A673 (cell line): ENCODE measurements at regions of chr12 and their contacts with region 1.

Region 1: DNA sequence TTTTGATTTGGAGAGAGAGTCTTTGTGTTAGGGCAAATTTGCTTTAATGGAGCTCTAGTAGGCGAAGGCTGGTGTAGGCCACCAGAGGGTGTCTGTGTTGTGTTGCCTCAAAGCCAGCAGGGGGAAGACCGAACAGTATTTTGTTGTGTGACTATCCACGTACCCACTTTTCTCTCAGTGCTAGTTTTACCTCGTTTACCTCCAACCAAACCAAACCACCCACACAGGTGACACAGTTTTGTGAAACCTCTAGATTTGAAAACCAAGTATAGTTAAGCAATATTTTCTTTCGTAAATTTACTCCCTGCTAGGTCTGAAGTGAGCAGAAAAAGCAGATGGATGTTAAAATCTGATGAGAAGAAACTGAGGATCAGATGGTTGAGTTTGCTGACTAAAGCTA is 36.3 kb upstream of the NPFF start:
- DNase-seq: peak; percentile 83
- H3K4me3 ChIP-seq: no peak overlapping the region
- H3K27ac ChIP-seq: peak overlapping the region; percentile 62
- H3K4me1 ChIP-seq: peaks cover 14% of the 10 kb centered on the region
- H3K27me3 ChIP-seq: no peaks in the 10 kb centered on the region
- CTCF ChIP-seq: peak; percentile 93

Region 2: DNA sequence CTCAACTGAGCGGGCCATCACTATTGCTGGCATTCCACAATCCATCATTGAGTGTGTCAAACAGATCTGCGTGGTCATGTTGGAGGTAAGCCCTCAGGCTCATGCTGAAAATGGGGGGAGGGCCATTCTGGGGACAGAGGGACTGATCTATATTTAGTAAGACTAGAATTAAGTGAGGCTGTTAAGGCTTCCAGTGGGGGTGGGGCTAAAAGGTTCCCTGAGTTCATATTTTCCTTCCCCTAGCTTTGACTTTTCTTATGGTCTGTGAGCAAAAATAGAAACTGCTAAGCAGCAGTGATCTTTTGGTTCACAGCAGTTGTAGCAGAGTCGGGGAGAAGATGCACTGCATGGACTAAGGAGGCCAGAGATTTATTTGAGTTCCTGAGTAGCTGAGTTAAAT is 82.5 kb before region 1 on chr12:
- CTCF ChIA-PET with region 1: no interaction called
- POLR2A ChIA-PET with region 1: no interaction called
- intact Hi-C with region 1: no loop called
- DNase-seq: no peak
- H3K4me3 ChIP-seq: no peak overlapping the region
- H3K27ac ChIP-seq: no peak overlapping the region
- H3K4me1 ChIP-seq: peaks cover 8% of the 10 kb centered on the region
- H3K27me3 ChIP-seq: no peaks in the 10 kb centered on the region
- CTCF ChIP-seq: no peak

Region 3: DNA sequence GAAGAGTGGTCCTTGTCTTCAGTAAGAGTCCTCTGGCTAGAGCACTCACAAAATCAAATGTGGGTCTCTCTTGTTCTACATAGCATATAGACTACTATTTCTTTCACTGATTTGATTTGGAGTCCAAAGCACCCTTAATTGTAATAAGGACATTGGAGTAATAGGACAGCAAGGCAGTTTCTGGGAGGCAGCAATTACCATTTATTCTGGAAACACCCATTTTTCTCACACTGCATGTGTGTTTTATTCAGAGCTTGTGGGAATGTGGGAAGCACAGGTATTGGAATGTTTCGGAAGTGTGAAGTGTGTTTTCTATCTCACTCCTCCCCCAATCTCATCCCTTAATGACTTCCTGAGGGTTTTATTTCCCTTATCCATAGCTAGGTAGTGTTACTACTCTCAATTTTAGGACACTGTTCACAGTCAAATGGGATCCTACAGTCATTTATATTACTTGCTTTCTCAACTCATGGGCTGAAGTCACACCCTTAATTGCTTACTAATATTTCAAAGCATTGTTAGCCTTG is 71.4 kb before region 1 on chr12:
- CTCF ChIA-PET with region 1: no interaction called
- POLR2A ChIA-PET with region 1: interaction called, 10 read pairs
- intact Hi-C with region 1: no loop called
- DNase-seq: no peak
- H3K4me3 ChIP-seq: no peak overlapping the region
- H3K27ac ChIP-seq: peak overlapping the region; percentile 14
- H3K4me1 ChIP-seq: peaks cover 4% of the 10 kb centered on the region
- H3K27me3 ChIP-seq: no peaks in the 10 kb centered on the region
- CTCF ChIP-seq: no peak

Region 4: GRCh38 chr12:53675651-53676453 is 132.3 kb after region 1 on chr12 and contains the start of gene ATP5MC2:
- CTCF ChIA-PET with region 1: interaction called, 35 read pairs
- POLR2A ChIA-PET with region 1: interaction called, 3 read pairs
- intact Hi-C with region 1: loop called (anchors 1 kb)
- DNase-seq: peak; percentile 99
- H3K4me3 ChIP-seq: peak within 1 kb of the TSS; percentile 73
- H3K27ac ChIP-seq: peak within 1 kb of the TSS; percentile 97
- H3K4me1 ChIP-seq: peaks cover 55% of the 10 kb centered on the region
- H3K27me3 ChIP-seq: no peaks in the 10 kb centered on the region
- CTCF ChIP-seq: peak; percentile 100
- total RNA-seq, gene ATP5MC2: 447 and 450 TPM in 2 replicates